ENCODE measurements at regions of chr7 and their contacts with region 1.

Region 1: GRCh38 chr7:107563775-107564552 is at the starts of genes COG5 and DUS4L:
- DNase-seq: peak; percentile 86
- H3K4me3 ChIP-seq: peak within 1 kb of the TSS; percentile 81
- H3K27ac ChIP-seq: peak within 1 kb of the TSS; percentile 57
- H3K4me1 ChIP-seq: peaks cover 50% of the 10 kb centered on the region
- CTCF ChIP-seq: no peak
- total RNA-seq, gene COG5: 59.0 and 60.2 TPM in 2 replicates
- total RNA-seq, gene DUS4L: 14.9 and 16.9 TPM in 2 replicates

Region 2: DNA sequence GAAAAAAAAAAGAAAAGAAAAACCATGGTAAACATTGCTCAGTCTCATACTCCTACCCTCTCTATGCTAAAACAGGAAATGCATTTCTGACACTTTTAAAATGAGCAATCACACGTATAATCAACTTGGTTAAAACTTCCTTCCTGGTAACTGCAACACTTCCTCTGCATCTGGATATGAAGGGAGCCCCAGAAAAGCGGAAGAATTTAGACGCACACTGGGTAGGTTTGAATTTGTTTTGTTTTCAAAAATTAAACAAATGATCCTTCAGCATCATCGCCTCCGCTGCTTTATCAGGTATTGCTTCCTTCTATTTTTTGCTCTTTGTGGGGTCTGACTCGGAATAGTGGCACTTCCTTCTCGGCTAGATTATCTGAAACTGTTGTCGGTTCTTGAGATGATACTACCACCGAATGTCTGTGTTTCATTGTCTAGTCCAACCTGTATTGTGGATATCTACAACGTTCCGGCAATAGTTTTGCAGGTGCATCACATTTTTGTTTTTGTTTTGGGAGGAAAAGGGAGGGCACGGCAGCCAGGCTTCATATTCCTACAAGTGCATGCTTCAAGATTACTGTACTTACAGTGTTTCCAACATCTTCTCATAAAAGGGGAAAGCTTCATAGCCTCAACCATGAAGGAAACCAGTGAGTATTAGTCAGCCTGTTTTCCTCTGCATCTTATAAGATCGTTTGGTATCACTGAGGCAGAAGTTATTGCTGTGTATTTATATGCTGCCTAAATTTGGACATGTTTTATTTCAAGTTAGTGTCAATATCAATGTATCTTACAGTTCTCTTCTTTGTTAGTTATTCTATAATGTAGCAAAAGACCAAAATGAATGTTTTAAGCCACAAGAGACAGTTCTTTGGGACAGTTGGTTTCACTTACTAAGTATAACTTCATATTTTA is 698.6 kb before region 1 on chr7 and contains the start of gene PIK3CG:
- CTCF ChIA-PET with region 1: no interaction called
- POLR2A ChIA-PET with region 1: no interaction called
- intact Hi-C with region 1: loop called (anchors 5 kb)
- DNase-seq: peak; percentile 87
- H3K4me3 ChIP-seq: peak within 1 kb of the TSS; percentile 82
- H3K27ac ChIP-seq: peak within 1 kb of the TSS; percentile 86
- H3K4me1 ChIP-seq: peaks cover 44% of the 10 kb centered on the region
- CTCF ChIP-seq: no peak
- total RNA-seq, gene PIK3CG: 21.1 and 22.8 TPM in 2 replicates

Region 3: DNA sequence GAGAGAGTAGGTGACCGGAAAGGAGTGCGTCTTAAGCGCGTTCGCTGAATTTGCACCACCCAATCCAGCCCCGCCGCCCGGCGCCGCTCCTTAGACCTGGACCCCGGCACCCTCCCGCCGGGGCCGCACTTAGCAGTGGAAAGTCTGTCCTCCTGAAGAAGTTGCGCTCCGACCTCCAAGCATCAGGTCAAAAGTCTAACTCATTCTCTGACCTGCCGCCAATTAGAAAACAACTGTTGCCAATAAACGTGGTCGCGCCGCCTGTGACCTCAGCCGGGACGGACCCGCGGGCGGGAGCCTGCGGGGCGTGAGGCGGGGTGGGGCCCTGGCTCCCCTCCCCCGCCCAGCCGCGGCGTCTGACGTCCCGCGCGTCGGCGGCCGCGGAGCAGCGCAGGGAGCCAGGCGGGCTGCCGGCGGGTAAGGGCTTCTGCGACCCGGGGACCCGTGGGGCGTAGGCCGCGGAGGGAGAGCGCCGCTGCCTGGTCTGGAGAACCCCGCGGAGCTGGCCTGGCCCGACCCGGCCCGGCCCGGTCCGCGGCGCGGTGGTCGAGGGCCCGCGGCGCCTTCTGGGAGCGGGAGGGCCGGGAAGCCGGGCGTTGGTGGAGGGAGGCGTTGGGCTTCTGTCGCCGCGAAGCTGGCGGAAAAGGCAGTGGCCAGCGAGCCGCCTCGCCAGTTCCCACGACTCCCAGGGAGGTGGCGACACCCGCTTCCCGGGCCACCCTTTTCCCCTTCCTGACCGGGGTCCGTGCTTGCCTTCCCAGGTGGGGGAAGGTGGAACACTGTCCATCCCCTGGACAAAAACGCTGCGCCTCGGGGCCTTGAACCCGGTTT is 16.1 kb after region 1 on chr7 and contains the start of gene BCAP29:
- CTCF ChIA-PET with region 1: no interaction called
- POLR2A ChIA-PET with region 1: interaction called, 25 read pairs
- intact Hi-C with region 1: loop called (anchors 1 kb)
- DNase-seq: peak; percentile 82
- H3K4me3 ChIP-seq: peak within 1 kb of the TSS; percentile 85
- H3K27ac ChIP-seq: peak within 1 kb of the TSS; percentile 45
- H3K4me1 ChIP-seq: peaks cover 18% of the 10 kb centered on the region
- CTCF ChIP-seq: peak; percentile 39
- total RNA-seq, gene BCAP29: 18.7 and 26.5 TPM in 2 replicates

Region 4: GRCh38 chr7:107924841-107925504 is 361.0 kb after region 1 on chr7:
- CTCF ChIA-PET with region 1: no interaction called
- POLR2A ChIA-PET with region 1: no interaction called
- intact Hi-C with region 1: no loop called
- DNase-seq: no peak
- H3K4me3 ChIP-seq: no peak overlapping the region
- H3K27ac ChIP-seq: no peak overlapping the region
- H3K4me1 ChIP-seq: no peaks in the 10 kb centered on the region
- CTCF ChIP-seq: no peak

Measured in OCI-LY7 (cell line).